Activated T-helper 2 cell treated with anti-CD3 and anti-CD28 coated beads, Interferon-gamma antibody, Interleukin-2, Interleukin-4, amounts not matched to agents 10 μg/mL and 5 μg/mL and 100 μg/mL, durations not matched to agents 14 hours and 24 hours and 36 hours (primary cell): ENCODE measurements at regions of chr10 and their contacts with region 1.

Region 1: GRCh38 chr10:114821293-114821914 is at the start of gene FHIP2A:
- DNase-seq: peak; percentile 82
- H3K4me3 Mint-ChIP-seq: peak within 1 kb of the TSS; percentile 93
- H3K27ac Mint-ChIP-seq: peak within 1 kb of the TSS; percentile 86
- H3K4me1 Mint-ChIP-seq: peaks cover 42% of the 10 kb centered on the region
- H3K27me3 Mint-ChIP-seq: peaks cover 19% of the 10 kb centered on the region
- total RNA-seq, gene FHIP2A: 26.3 and 26.9 TPM in 2 replicates

Region 2: DNA sequence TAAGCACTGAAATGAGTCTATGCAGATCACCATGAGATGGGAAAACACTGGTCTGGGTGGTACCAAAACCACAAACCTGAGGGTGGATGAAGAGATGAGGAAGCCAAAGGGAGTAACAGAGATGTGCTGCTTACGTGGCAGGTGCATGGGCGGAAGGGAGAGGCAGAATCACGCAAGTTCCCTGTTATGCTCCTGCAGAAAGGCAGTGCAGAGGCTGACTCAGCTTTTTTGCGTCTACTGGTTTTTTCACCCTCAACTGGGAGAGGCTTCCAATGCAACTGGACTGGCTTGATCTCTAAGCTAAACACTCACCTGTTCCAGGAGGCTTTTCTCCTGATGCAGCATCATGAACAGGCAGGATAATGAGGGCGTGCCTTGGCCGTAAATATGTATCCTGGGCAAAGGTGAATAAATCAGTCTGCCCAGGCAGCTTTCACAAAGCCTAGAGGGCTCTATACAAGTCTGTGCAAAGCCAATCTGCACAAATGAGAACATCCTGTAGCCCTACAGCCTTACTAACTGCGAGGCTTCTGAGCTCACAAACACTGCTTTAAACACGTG is 321.7 kb before region 1 on chr10:
- intact Hi-C with region 1: loop called (anchors 5 kb)
- DNase-seq: peak; percentile 55
- H3K4me3 Mint-ChIP-seq: peak overlapping the region; percentile 53
- H3K27ac Mint-ChIP-seq: peak overlapping the region; percentile 92
- H3K4me1 Mint-ChIP-seq: peaks cover 72% of the 10 kb centered on the region
- H3K27me3 Mint-ChIP-seq: no peaks in the 10 kb centered on the region

Region 3: GRCh38 chr10:114526504-114527238 is 294.7 kb before region 1 on chr10:
- intact Hi-C with region 1: loop called (anchors 1 kb)
- DNase-seq: peak; percentile 88
- H3K4me3 Mint-ChIP-seq: peak overlapping the region; percentile 83
- H3K27ac Mint-ChIP-seq: peak overlapping the region; percentile 94
- H3K4me1 Mint-ChIP-seq: peaks cover 57% of the 10 kb centered on the region
- H3K27me3 Mint-ChIP-seq: no peaks in the 10 kb centered on the region

Region 4: GRCh38 chr10:114772496-114773196 is 48.8 kb before region 1 on chr10:
- intact Hi-C with region 1: loop called (anchors 5 kb)
- DNase-seq: no peak
- H3K4me3 Mint-ChIP-seq: no peak overlapping the region
- H3K27ac Mint-ChIP-seq: no peak overlapping the region
- H3K4me1 Mint-ChIP-seq: peaks cover 9% of the 10 kb centered on the region
- H3K27me3 Mint-ChIP-seq: peaks cover 47% of the 10 kb centered on the region

Region 5: DNA sequence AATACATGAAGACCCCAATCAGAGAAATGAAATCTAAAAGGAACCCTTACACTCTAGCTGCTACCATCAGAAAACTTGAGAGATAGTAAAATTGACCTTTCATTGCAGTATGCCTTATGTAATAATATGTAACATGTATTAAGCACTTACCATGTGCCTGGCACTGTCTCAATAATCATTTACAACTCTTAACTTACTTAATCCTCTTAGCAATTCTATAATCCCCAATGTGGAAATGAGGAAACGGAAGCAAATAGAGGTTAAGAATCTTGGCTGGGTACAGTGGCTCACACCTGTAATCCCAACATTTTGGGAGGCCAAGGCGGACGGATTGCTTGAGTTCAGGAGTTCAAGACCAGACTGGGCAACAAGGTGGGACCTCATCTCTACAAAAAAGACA is 29.6 kb before region 1 on chr10:
- intact Hi-C with region 1: no loop called
- DNase-seq: no peak
- H3K4me3 Mint-ChIP-seq: no peak overlapping the region
- H3K27ac Mint-ChIP-seq: no peak overlapping the region
- H3K4me1 Mint-ChIP-seq: peaks cover 2% of the 10 kb centered on the region
- H3K27me3 Mint-ChIP-seq: no peaks in the 10 kb centered on the region

Region 6: GRCh38 chr10:114856544-114857282 is 35.3 kb after region 1 on chr10:
- intact Hi-C with region 1: loop called (anchors 1 kb)
- DNase-seq: no peak
- H3K4me3 Mint-ChIP-seq: peak overlapping the region; percentile 61
- H3K27ac Mint-ChIP-seq: peak overlapping the region; percentile 90
- H3K4me1 Mint-ChIP-seq: peaks cover 21% of the 10 kb centered on the region
- H3K27me3 Mint-ChIP-seq: no peaks in the 10 kb centered on the region

Region 7: GRCh38 chr10:114925587-114926586 is 104.5 kb after region 1 on chr10:
- intact Hi-C with region 1: loop called (anchors 5 kb)
- DNase-seq: peak; percentile 18
- H3K4me3 Mint-ChIP-seq: no peak overlapping the region
- H3K27ac Mint-ChIP-seq: peak overlapping the region; percentile 60
- H3K4me1 Mint-ChIP-seq: peaks cover 22% of the 10 kb centered on the region
- H3K27me3 Mint-ChIP-seq: peaks cover 2% of the 10 kb centered on the region

Region 8: GRCh38 chr10:115073796-115074195 is 252.4 kb after region 1 on chr10:
- intact Hi-C with region 1: no loop called
- DNase-seq: no peak
- H3K4me3 Mint-ChIP-seq: no peak overlapping the region
- H3K27ac Mint-ChIP-seq: no peak overlapping the region
- H3K4me1 Mint-ChIP-seq: no peaks in the 10 kb centered on the region
- H3K27me3 Mint-ChIP-seq: peaks cover 19% of the 10 kb centered on the region